ENCODE measurements at regions of chr5 and their contacts with region 1.

Region 1: GRCh38 chr5:141878711-141879425 is 658 bp upstream of the PCDH1 start:
- DNase-seq: peak; percentile 75 to 98 (median 84)
- ATAC-seq: peak; percentile 81 to 88 (median 83)
- H3K4me3 ChIP-seq: peak overlapping the region; percentile 46 to 61
- H3K4me3 Mint-ChIP-seq: peak overlapping the region; percentile 64 to 81 (median 80)
- H3K27ac ChIP-seq: no peak overlapping the region
- H3K27ac Mint-ChIP-seq: no peak overlapping the region
- H3K4me1 ChIP-seq: peaks cover 10 to 53% of the 10 kb centered on the region in 2 experiments
- H3K4me1 Mint-ChIP-seq: peaks cover 30 to 34% (median 33%) of the 10 kb centered on the region in 3 donors
- H3K27me3 ChIP-seq: peaks cover 20 to 94% of the 10 kb centered on the region in 2 experiments
- H3K27me3 Mint-ChIP-seq: peaks cover 70 to 80% of the 10 kb centered on the region in 2 donors

Region 2: DNA sequence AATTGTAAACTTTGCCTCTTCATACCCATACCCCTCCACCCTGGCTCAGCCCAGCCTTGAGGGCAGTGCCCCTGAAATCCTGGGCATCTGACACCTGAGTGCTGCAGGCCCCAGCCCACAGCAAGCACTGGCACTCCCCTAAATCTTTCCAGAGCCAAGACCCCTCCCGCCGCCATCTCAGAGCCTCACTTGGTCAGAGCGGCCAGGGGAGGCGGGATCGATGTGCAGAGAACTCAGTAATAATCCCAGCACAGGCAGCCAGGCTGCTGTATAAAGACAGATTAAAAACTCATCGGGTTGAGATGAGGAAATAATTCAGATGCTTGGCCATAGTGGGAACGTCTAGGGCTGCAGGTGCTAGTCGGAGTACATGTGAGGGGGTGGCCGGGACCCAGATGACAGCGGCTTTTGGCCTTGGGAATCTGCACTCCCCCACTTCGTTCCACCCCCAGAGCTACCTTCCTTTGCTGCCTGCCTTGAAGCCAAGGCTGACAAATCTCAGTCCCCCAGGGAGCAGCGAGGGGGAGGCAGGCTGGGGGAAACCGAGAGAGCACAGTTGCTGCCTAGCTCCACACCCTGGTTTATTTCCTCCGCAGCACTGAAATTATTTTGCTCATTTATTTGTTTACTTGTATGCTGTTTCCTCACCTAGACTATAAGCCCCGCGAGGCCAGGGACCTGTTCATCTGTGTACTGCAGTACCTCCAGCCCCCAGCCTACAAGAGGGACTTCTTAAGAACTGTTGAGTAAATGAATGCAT is 177.3 kb before region 1 on chr5:
- CTCF ChIA-PET with region 1: interaction called, 7 to 18 read pairs
- POLR2A ChIA-PET with region 1: no interaction called
- DNase-seq: no peak
- ATAC-seq: peak; percentile 7 to 40 (median 20)
- H3K4me3 ChIP-seq: peak overlapping the region; percentile 52 to 63
- H3K4me3 Mint-ChIP-seq: peak overlapping the region in 1 of 3 donors; percentile 76
- H3K27ac ChIP-seq: no peak overlapping the region
- H3K27ac Mint-ChIP-seq: no peak overlapping the region
- H3K4me1 ChIP-seq: peaks cover 6 to 24% of the 10 kb centered on the region in 2 experiments
- H3K4me1 Mint-ChIP-seq: peaks cover 8 to 22% (median 15%) of the 10 kb centered on the region in 3 donors
- H3K27me3 ChIP-seq: peaks cover 22 to 51% of the 10 kb centered on the region in 2 experiments
- H3K27me3 Mint-ChIP-seq: peaks cover 33 to 38% of the 10 kb centered on the region in 2 donors

Region 3: GRCh38 chr5:141849375-141850243 is 29.3 kb before region 1 on chr5:
- CTCF ChIA-PET with region 1: interaction called in 1 of 2 experiments, 11 read pairs
- POLR2A ChIA-PET with region 1: no interaction called
- DNase-seq: peak in 34 of 35 experiments; percentile 24 to 80 (median 54)
- ATAC-seq: peak; percentile 82 to 84 (median 83)
- H3K4me3 ChIP-seq: peak overlapping the region; percentile 87 to 94
- H3K4me3 Mint-ChIP-seq: peak overlapping the region; percentile 82 to 88 (median 83)
- H3K27ac ChIP-seq: peak overlapping the region; percentile 83
- H3K27ac Mint-ChIP-seq: peak overlapping the region; percentile 82 to 86
- H3K4me1 ChIP-seq: peaks cover 2 to 22% of the 10 kb centered on the region in 2 experiments
- H3K4me1 Mint-ChIP-seq: peaks cover 10 to 21% (median 15%) of the 10 kb centered on the region in 3 donors
- H3K27me3 ChIP-seq: peaks cover 0 to 21% of the 10 kb centered on the region in 2 experiments
- H3K27me3 Mint-ChIP-seq: peaks cover 0 to 2% of the 10 kb centered on the region in 2 donors

Measured in T-cell (primary cell).